Sigmoid colon (tissue), 7 donors: ENCODE measurements at regions of chr3 and their contacts with region 1.

Region 1: DNA sequence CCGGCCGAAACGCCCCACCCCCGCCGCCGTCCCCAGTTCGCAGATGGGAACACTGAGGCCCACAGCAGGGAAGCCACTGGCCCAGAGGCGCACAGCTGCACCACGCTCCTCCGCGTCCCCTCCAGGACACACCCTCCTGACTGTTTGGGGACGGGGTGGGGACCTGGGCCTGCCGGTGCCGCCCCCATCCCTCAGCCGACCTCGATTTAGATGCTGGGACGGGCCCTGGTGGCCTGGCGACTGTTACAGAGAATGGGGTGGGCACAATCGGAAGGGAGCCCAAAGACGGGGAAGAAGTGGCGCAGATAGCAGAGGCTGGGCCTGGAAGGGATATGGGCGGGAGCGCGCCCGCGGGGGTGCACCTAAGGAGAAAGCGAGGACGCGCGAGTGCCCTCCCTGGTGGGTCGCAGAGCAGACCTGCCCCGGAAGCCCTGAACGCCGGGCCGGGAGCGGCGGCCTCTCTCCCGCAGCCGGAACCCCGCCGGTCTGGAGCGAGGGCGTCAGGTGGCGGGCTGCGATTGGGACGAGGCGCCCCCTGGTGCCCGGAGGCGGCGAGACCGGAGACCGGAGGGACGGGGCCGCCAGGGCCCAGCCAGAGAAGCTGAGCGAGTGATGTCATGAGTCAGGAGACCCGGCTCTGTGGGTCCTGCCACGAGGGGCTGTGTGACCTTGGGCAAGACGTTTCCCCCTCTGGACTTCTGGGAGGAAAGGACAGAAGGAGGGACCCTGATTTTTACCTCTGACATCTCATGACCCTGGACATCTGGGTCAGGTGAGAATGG is 78.4 kb downstream of the IQSEC1 start:
- DNase-seq: peak; percentile 94
- H3K4me3 ChIP-seq: peak overlapping the region; percentile 52 to 99 (median 84)
- H3K27ac ChIP-seq: peak overlapping the region; percentile 83 to 93 (median 92)
- H3K4me1 ChIP-seq: peaks cover 0 to 26% (median 15%) of the 10 kb centered on the region in 4 donors
- H3K27me3 ChIP-seq: no peaks in the 10 kb centered on the region
- CTCF ChIP-seq: peak; percentile 85 to 93 (median 91)
- EP300 ChIP-seq: peak in 1 of 4 donors; percentile 12
- POLR2A ChIP-seq: peak; percentile 55 to 77

Region 2: GRCh38 chr3:12663936-12664908 is 330.6 kb before region 1 on chr3 and contains the start of gene RAF1:
- intact Hi-C with region 1: loop called (anchors 10 kb)
- DNase-seq: peak; percentile 99
- H3K4me3 ChIP-seq: peak within 1 kb of the TSS; percentile 72 to 100 (median 91)
- H3K27ac ChIP-seq: peak within 1 kb of the TSS; percentile 94 to 100 (median 99)
- H3K4me1 ChIP-seq: peaks cover 0 to 40% (median 34%) of the 10 kb centered on the region in 4 donors
- H3K27me3 ChIP-seq: no peaks in the 10 kb centered on the region
- CTCF ChIP-seq: no peak
- EP300 ChIP-seq: no peak
- POLR2A ChIP-seq: peak; percentile 60 to 78
- total RNA-seq, gene RAF1: 83.8 to 101 (median 95.1) TPM

Region 3: GRCh38 chr3:12891985-12892839 is 102.6 kb before region 1 on chr3:
- intact Hi-C with region 1: loop called (anchors 5 kb)
- DNase-seq: no peak
- H3K4me3 ChIP-seq: peak overlapping the region in 3 of 4 donors; percentile 20 to 31 (median 27)
- H3K27ac ChIP-seq: no peak overlapping the region
- H3K4me1 ChIP-seq: peaks cover 0 to 18% (median 10%) of the 10 kb centered on the region in 4 donors
- H3K27me3 ChIP-seq: no peaks in the 10 kb centered on the region
- CTCF ChIP-seq: peak; percentile 92 to 96 (median 94)
- EP300 ChIP-seq: no peak
- POLR2A ChIP-seq: no peak

Region 4: DNA sequence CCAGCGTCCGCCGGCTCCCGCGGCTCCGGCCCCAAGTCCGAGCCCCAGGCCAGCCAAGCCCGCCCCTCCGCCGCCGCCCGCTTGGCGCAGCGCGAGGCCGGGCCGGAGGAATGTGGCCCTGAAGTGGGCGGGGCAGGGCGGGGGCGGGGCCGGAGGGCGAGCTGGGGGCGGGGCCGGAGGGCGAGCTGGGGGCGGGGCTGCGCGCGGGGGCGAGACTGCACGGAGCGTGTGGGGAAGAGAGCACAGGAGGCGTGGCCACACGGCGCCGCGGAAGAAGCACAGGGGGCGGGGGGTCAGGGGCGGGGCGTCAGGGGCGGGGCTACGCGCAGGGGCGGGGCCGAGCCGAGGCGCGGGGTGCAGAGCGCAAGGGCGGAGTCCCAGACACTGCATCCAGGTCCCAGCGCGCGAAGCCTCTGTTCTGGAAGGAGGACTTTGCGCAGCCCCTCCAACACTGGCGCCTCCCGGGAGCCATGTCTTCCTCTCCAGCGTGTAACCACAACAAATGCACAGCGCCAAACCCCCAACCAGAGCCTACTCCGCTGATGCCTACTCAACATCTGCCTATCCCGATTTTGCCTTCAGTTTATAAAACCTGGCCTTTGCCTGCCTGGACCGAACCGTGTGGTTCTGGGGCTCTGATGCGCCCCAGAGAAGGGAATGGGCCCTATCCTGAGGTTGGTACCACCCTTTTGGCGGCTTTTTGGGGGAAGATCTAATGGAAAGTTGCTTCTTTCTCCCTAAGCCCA is 27.0 kb before region 1 on chr3:
- intact Hi-C with region 1: loop called (anchors 2 kb)
- DNase-seq: peak; percentile 96
- H3K4me3 ChIP-seq: peak overlapping the region; percentile 73 to 97 (median 85)
- H3K27ac ChIP-seq: peak overlapping the region; percentile 82 to 84 (median 82)
- H3K4me1 ChIP-seq: peaks cover 0 to 59% (median 48%) of the 10 kb centered on the region in 4 donors
- H3K27me3 ChIP-seq: no peaks in the 10 kb centered on the region
- CTCF ChIP-seq: no peak
- EP300 ChIP-seq: no peak
- POLR2A ChIP-seq: peak in 1 of 2 donors; percentile 10

Region 5: DNA sequence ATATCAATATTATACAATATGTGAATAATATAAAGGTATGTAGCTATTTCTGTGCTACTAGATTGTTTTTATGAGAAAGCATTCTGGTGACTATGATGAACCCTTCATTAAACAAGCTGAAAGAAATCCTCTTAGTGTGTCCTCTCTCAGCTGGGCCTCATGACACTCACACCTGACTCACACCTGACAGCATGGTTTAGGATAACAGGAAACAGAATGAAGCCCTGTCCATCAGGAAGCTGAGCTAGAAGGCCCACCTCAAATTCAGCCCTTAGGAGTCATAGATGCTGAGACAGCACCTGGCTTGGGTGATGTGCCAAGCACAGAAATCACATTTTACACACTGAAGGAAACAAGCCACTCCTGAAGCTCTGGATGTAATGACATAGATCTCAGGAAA is 1099.0 kb after region 1 on chr3:
- intact Hi-C with region 1: no loop called
- DNase-seq: no peak
- H3K4me3 ChIP-seq: no peak overlapping the region
- H3K27ac ChIP-seq: no peak overlapping the region
- H3K4me1 ChIP-seq: no peaks in the 10 kb centered on the region
- H3K27me3 ChIP-seq: no peaks in the 10 kb centered on the region
- CTCF ChIP-seq: no peak
- EP300 ChIP-seq: no peak
- POLR2A ChIP-seq: no peak

Region 6: DNA sequence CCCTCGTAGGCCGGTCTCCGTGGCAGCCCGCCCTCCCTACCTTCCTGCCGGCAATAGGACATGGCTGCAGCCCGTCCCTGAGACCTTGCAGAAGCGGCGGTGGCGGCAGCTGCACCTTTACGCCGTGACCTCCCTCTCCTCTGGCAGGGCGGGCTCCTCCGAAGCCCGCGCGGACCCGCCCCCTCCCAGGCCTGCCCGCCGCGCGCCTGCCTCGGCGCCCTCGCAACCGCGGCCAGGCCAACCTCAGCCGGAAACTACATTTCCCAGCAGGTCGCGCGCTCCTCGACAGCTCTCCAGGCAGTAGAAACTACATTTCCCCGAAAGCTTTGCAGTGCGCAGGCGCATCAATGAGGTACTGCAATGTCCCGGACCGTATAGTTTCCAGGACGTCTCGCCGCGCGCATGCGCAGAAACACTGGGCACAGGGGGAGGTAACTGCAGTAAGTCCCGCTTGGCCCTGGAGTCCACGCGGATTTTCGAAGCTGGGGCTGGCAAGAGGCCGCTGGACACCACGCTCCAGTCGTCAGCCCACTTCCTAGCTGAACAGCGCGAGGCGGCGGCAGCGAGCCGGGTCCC is 1129.9 kb after region 1 on chr3 and contains the starts of genes CHCHD4 and TMEM43:
- intact Hi-C with region 1: loop called (anchors 5 kb)
- DNase-seq: peak; percentile 100
- H3K4me3 ChIP-seq: peak within 1 kb of the TSS; percentile 68 to 96 (median 87)
- H3K27ac ChIP-seq: peak within 1 kb of the TSS; percentile 86 to 97 (median 94)
- H3K4me1 ChIP-seq: peaks cover 0 to 49% (median 38%) of the 10 kb centered on the region in 4 donors
- H3K27me3 ChIP-seq: no peaks in the 10 kb centered on the region
- CTCF ChIP-seq: no peak
- EP300 ChIP-seq: peak in 1 of 4 donors; percentile 53
- POLR2A ChIP-seq: peak; percentile 62 to 71
- total RNA-seq, gene CHCHD4: 13.0 to 33.1 (median 26.3) TPM
- total RNA-seq, gene TMEM43: 68.0 to 88.3 (median 80.2) TPM